ENCODE measurements at regions of chrX and their contacts with region 1.

Region 1: DNA sequence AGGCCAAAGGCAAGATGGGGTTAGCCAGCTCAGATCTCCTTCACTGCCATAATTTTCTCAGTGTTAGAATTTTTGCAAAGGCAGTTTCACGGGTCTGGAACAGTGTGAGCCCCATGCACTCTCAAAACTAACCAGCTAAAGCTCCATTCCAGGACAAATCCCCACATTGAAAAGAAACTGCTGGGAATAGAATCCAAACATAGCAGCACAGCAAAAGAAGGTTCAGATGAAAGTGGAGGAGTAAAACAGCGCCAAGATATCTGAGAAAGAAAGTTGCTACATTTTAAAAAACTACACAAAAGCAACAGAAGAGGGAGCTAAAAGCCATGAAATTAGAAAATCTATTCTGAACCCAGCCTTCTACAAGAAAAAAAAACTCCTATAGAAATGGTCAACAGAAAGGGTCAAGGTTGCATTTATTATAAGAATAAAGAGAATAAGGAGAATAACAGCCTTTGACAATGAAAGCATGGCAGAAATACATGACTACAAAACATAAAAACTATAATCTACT is 39.6 kb upstream of the SLC7A3 start:
- DNase-seq: no peak
- H3K4me3 ChIP-seq: no peak overlapping the region
- H3K4me3 Mint-ChIP-seq: no peak overlapping the region
- H3K27ac Mint-ChIP-seq: no peak overlapping the region
- H3K4me1 ChIP-seq: no peaks in the 10 kb centered on the region
- H3K4me1 Mint-ChIP-seq: no peaks in the 10 kb centered on the region
- H3K27me3 ChIP-seq: no peaks in the 10 kb centered on the region
- H3K27me3 Mint-ChIP-seq: peaks cover 3% of the 10 kb centered on the region
- CTCF ChIP-seq: peak in 1 of 2 experiments; percentile 24

Region 2: GRCh38 chrX:71056867-71057266 is 86.3 kb after region 1 on chrX:
- CTCF ChIA-PET with region 1: no interaction called
- POLR2A ChIA-PET with region 1: no interaction called
- intact Hi-C with region 1: no loop called
- DNase-seq: no peak
- H3K4me3 ChIP-seq: no peak overlapping the region
- H3K4me3 Mint-ChIP-seq: no peak overlapping the region
- H3K27ac Mint-ChIP-seq: no peak overlapping the region
- H3K4me1 ChIP-seq: peaks cover 9% of the 10 kb centered on the region
- H3K4me1 Mint-ChIP-seq: peaks cover 9% of the 10 kb centered on the region
- H3K27me3 ChIP-seq: no peaks in the 10 kb centered on the region
- H3K27me3 Mint-ChIP-seq: no peaks in the 10 kb centered on the region
- CTCF ChIP-seq: no peak

Region 3: GRCh38 chrX:71175531-71175930 is 205.0 kb after region 1 on chrX:
- CTCF ChIA-PET with region 1: no interaction called
- POLR2A ChIA-PET with region 1: interaction called, 14 read pairs
- intact Hi-C with region 1: loop called (anchors 1 kb)
- DNase-seq: no peak
- H3K4me3 ChIP-seq: no peak overlapping the region
- H3K4me3 Mint-ChIP-seq: no peak overlapping the region
- H3K27ac Mint-ChIP-seq: no peak overlapping the region
- H3K4me1 ChIP-seq: peaks cover 18% of the 10 kb centered on the region; the same call in 1 of the 2 replicates
- H3K4me1 Mint-ChIP-seq: peaks cover 20% of the 10 kb centered on the region
- H3K27me3 ChIP-seq: no peaks in the 10 kb centered on the region
- H3K27me3 Mint-ChIP-seq: no peaks in the 10 kb centered on the region
- CTCF ChIP-seq: no peak